Psoas muscle (tissue), 8 donors: ENCODE measurements at regions of chr6 and their contacts with region 1.

Region 1: GRCh38 chr6:152863618-152864326 is 113.2 kb downstream of the VIP start:
- DNase-seq: peak in 1 of 2 donors; percentile 22
- ATAC-seq: peak; percentile 55 to 91 (median 74)
- H3K4me3 ChIP-seq: no peak overlapping the region
- H3K27ac ChIP-seq: no peak overlapping the region
- H3K4me1 ChIP-seq: peaks cover 4% of the 10 kb centered on the region
- H3K27me3 ChIP-seq: no peaks in the 10 kb centered on the region
- CTCF ChIP-seq: peak; percentile 70

Region 2: GRCh38 chr6:152720974-152721373 is 142.8 kb before region 1 on chr6:
- intact Hi-C with region 1: no loop called
- DNase-seq: no peak
- ATAC-seq: no peak
- H3K4me3 ChIP-seq: no peak overlapping the region
- H3K27ac ChIP-seq: no peak overlapping the region
- H3K4me1 ChIP-seq: no peaks in the 10 kb centered on the region
- H3K27me3 ChIP-seq: no peaks in the 10 kb centered on the region
- CTCF ChIP-seq: no peak

Region 3: GRCh38 chr6:152932865-152933264 is 69.1 kb after region 1 on chr6:
- intact Hi-C with region 1: no loop called
- DNase-seq: no peak
- ATAC-seq: no peak
- H3K4me3 ChIP-seq: no peak overlapping the region
- H3K27ac ChIP-seq: no peak overlapping the region
- H3K4me1 ChIP-seq: no peaks in the 10 kb centered on the region
- H3K27me3 ChIP-seq: peaks cover 0 to 4% (median 0%) of the 10 kb centered on the region in 3 donors
- CTCF ChIP-seq: no peak

Region 4: DNA sequence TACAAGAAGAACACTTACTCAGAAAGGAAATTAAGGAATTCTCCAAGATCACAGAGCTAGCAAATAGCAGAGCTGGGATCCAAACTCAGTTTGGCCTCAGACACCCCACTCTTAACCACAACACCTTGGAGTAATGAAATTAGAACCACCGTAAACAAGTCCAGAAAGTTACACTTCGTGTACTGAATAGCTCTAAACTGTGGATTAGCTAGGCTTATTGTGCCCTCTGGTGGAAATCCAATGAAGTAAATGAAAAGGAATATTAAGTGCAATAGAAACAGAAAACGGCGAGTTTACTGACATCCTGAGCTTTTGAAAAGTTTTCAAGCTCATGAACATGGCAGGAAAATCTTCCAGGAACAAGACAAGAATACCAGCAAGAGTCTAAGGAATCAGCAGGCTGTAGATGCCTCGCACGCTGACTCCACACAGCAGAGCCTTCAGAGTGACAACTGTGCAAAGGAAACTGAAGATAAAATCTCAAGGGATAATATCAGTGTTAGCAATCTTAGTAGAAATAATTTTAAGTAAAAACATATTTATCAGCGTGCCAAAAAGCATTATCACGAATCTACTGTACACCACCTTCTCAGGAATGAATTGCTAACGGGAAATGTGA is 84.5 kb after region 1 on chr6:
- intact Hi-C with region 1: loop called (anchors 2 kb)
- DNase-seq: no peak
- ATAC-seq: peak in 3 of 4 donors; percentile 56 to 90 (median 68)
- H3K4me3 ChIP-seq: peak overlapping the region; percentile 36
- H3K27ac ChIP-seq: no peak overlapping the region
- H3K4me1 ChIP-seq: peaks cover 12% of the 10 kb centered on the region
- H3K27me3 ChIP-seq: no peaks in the 10 kb centered on the region
- CTCF ChIP-seq: peak; percentile 70

Region 5: DNA sequence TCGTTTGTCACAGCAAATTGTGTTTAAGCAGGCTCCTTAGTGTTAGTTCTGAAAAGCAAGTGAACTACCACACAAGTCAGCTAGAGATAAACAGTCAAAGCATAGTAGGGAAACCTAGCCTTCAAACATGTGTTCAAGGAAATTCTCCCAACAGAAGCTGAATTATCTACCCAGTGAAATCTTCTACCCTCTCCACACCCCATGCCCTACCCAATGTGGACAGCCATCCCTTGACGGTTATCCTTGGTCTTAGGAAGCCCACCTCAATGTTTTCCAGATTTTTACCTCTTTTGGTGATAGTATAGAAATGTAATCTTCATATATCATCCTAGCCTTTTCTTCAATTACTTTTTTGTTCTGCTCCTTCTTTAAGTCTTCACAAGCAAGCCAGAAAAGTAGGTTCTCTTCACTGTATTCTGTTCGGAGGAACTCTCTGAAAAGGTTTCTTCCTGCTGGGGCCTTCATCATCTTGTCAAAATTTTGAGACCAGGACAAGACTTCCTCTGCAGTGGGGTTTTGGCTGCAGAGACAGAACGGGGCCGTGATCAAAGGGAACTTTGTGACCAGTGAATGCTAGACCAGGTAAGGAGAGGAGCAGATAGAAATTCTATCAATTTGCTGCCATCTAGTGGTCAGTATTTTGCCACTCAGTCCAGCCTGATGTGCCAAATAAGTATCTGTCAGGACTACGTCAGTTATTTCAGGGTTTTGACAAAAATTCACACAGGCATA is 160.4 kb after region 1 on chr6:
- intact Hi-C with region 1: loop called (anchors 1 to 5 kb)
- DNase-seq: no peak
- ATAC-seq: peak; percentile 64 to 91 (median 76)
- H3K4me3 ChIP-seq: no peak overlapping the region
- H3K27ac ChIP-seq: no peak overlapping the region
- H3K4me1 ChIP-seq: no peaks in the 10 kb centered on the region
- H3K27me3 ChIP-seq: no peaks in the 10 kb centered on the region
- CTCF ChIP-seq: peak; percentile 80